ENCODE measurements at regions of chr2 and their contacts with region 1.

Region 1: GRCh38 chr2:241686649-241687425 is at the start of gene DTYMK:
- DNase-seq: peak; percentile 96
- H3K4me3 ChIP-seq: peak within 1 kb of the TSS; percentile 90
- H3K27ac ChIP-seq: peak within 1 kb of the TSS; percentile 69
- H3K4me1 ChIP-seq: peaks cover 17% of the 10 kb centered on the region
- CTCF ChIP-seq: no peak
- total RNA-seq, gene DTYMK: 104 and 118 TPM in 2 replicates

Region 2: GRCh38 chr2:241102239-241102803 is 584.5 kb before region 1 on chr2 and contains the start of gene MTERF4:
- CTCF ChIA-PET with region 1: no interaction called
- POLR2A ChIA-PET with region 1: no interaction called
- intact Hi-C with region 1: loop called (anchors 2 kb)
- DNase-seq: peak; percentile 93
- H3K4me3 ChIP-seq: peak within 1 kb of the TSS; percentile 82
- H3K27ac ChIP-seq: peak within 1 kb of the TSS; percentile 63
- H3K4me1 ChIP-seq: peaks cover 33% of the 10 kb centered on the region
- CTCF ChIP-seq: no peak
- total RNA-seq, gene MTERF4: 57.7 and 58.9 TPM in 2 replicates

Region 3: DNA sequence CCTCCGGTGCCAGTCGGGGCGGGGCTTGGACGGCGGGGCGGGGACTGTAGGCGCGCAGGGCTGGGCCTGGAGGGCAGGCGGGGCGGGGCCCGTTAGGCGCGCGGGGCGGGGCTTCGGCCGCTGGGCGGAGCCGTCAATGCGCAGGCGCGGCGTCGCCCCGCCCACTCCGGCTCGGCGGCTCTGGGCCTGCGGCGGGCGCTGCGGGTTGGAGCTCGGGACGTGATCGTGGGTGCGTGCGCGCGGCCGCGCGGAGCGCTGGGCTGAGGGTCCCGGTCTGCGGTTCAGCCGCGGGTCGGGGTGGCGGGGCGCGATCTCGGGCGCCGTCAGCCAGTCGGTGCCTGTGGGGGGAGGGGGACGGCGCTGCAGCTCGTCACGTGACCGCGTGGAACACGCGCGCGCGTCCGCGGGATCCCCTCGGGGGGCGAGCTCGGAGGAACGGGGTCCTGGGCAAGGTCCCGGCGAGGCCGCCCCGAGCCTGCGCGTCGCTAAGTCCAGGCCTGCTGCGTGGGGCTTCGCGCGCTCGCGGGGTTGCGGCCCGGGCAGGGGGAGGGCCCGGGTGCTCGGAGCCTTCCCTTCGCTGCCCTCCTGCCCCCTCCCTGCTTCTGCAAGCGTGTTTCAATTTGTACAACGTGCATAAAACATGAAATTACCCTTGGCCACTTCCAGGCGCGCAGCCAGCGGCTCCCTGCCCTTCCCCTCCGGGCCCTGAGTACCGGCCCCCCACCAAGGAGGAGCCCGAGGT is 47.8 kb after region 1 on chr2 and contains the start of gene D2HGDH:
- CTCF ChIA-PET with region 1: no interaction called
- POLR2A ChIA-PET with region 1: interaction called, 7 read pairs
- intact Hi-C with region 1: loop called (anchors 2 kb)
- DNase-seq: peak; percentile 90
- H3K4me3 ChIP-seq: peak within 1 kb of the TSS; percentile 81
- H3K27ac ChIP-seq: peak within 1 kb of the TSS; percentile 48
- H3K4me1 ChIP-seq: peaks cover 22% of the 10 kb centered on the region
- CTCF ChIP-seq: no peak
- total RNA-seq, gene D2HGDH: 19.4 and 23.2 TPM in 2 replicates